ENCODE measurements at regions of chr19 and their contacts with region 1.

Region 1: GRCh38 chr19:34171877-34172660 is at the start of gene LSM14A:
- DNase-seq: peak; percentile 79 to 89
- ATAC-seq: peak; percentile 91 to 93
- H3K4me3 ChIP-seq: peak within 1 kb of the TSS; percentile 87 to 94 (median 90)
- H3K27ac ChIP-seq: peak within 1 kb of the TSS; percentile 94 to 98 (median 98)
- H3K4me1 ChIP-seq: peaks cover 43 to 44% of the 10 kb centered on the region in 2 donors
- H3K27me3 ChIP-seq: no peaks in the 10 kb centered on the region
- CTCF ChIP-seq: peak in 1 of 5 experiments; percentile 30
- POLR2A ChIP-seq: peak; percentile 82 to 89
- total RNA-seq, gene LSM14A: 104 to 120 (median 115) TPM

Region 2: GRCh38 chr19:34134190-34135053 is 37.6 kb before region 1 on chr19:
- in situ Hi-C with region 1: no loop called
- intact Hi-C with region 1: loop called (anchors 1 kb)
- DNase-seq: peak; percentile 60 to 77
- ATAC-seq: peak; percentile 93 to 94
- H3K4me3 ChIP-seq: peak overlapping the region; percentile 76 to 87 (median 85)
- H3K27ac ChIP-seq: peak overlapping the region; percentile 87 to 90 (median 89)
- H3K4me1 ChIP-seq: peaks cover 0 to 5% of the 10 kb centered on the region in 2 donors
- H3K27me3 ChIP-seq: no peaks in the 10 kb centered on the region
- CTCF ChIP-seq: no peak
- POLR2A ChIP-seq: peak; percentile 62 to 73

Region 3: DNA sequence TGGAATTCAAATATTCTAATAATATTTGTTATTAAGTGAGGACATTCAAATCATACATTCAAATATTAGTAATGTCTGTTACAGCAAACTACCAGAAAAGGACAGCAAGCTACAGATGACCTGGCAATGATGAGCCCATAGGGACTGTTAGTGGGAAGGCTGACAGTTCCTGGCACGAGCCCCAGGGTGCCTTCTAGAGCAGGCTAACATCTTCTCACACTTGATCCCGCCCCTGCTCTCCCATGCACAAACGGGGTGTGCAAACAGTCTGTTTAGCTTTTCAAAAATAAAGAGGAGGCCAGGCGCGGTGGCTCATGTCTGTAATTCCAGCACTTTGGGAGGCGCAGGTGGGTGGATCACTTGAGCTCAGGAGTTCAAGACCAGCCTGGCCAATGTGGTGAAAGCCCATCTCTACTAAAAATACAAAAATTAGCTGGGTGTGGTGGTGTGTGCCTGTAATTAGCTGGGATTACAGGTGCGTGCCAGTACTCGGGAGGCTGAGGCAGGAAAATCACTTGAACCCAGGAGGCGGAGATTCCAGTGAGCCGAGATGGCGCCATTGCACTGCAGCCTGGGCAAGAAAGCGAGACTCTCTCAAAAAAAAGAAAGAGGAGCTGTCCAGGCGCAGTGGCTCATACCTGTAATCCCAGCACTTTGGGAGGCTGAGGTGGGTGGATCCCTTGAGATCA is 72.7 kb after region 1 on chr19:
- in situ Hi-C with region 1: no loop called
- intact Hi-C with region 1: no loop called
- DNase-seq: no peak
- ATAC-seq: no peak
- H3K4me3 ChIP-seq: no peak overlapping the region
- H3K27ac ChIP-seq: no peak overlapping the region
- H3K4me1 ChIP-seq: peaks cover 9 to 14% of the 10 kb centered on the region in 2 donors
- H3K27me3 ChIP-seq: no peaks in the 10 kb centered on the region
- CTCF ChIP-seq: no peak
- POLR2A ChIP-seq: no peak